Dendritic cell treated with granulocyte-macrophage colony-stimulating factor and Interleukin-4, amounts not matched to agents 40 ng/mL and 50 ng/mL, for 4 days (primary cell): ENCODE measurements at regions of chr1 and their contacts with region 1.

Region 1: GRCh38 chr1:173409613-173410012 is 67.5 kb upstream of the PRDX6 start:
- H3K4me3 Mint-ChIP-seq: no peak overlapping the region
- H3K27ac Mint-ChIP-seq: no peak overlapping the region
- H3K4me1 Mint-ChIP-seq: peaks cover 54% of the 10 kb centered on the region
- H3K27me3 Mint-ChIP-seq: peaks cover 3% of the 10 kb centered on the region

Region 2: GRCh38 chr1:173117108-173117633 is 292.4 kb before region 1 on chr1:
- intact Hi-C with region 1: loop called (anchors 5 kb)
- H3K4me3 Mint-ChIP-seq: no peak overlapping the region
- H3K27ac Mint-ChIP-seq: peak overlapping the region; percentile 73
- H3K4me1 Mint-ChIP-seq: peaks cover 52% of the 10 kb centered on the region
- H3K27me3 Mint-ChIP-seq: no peaks in the 10 kb centered on the region

Region 3: DNA sequence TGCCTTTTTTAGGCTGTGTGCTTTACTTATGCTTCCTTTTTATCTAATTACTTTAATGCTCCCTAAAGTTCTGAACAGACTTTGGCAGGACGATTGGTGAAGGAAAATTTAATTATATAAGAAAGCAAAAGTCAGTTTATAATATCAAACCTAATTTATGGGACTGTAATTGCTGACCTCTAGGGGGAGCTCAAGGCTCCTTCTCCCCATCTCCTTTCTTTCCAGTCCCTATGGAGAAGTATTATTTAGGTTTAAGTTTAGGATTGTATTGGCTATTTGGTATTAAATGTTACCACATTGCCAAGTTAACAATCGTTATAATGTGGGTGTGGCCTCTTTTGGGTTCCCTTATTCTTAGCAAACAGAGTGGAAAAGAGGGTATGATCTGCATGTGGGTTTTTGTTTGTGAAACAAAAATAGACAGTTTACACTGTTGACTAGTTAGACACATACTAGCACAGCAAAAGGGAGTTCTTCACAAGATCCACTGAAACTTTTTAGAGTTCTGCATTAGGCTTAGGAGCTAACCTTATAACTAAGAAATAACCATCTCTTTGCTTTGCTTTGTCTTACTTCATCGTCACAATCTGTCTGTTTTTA is 154.3 kb before region 1 on chr1:
- intact Hi-C with region 1: loop called (anchors 10 kb)
- H3K4me3 Mint-ChIP-seq: no peak overlapping the region
- H3K27ac Mint-ChIP-seq: no peak overlapping the region
- H3K4me1 Mint-ChIP-seq: peaks cover 7% of the 10 kb centered on the region
- H3K27me3 Mint-ChIP-seq: no peaks in the 10 kb centered on the region

Region 4: DNA sequence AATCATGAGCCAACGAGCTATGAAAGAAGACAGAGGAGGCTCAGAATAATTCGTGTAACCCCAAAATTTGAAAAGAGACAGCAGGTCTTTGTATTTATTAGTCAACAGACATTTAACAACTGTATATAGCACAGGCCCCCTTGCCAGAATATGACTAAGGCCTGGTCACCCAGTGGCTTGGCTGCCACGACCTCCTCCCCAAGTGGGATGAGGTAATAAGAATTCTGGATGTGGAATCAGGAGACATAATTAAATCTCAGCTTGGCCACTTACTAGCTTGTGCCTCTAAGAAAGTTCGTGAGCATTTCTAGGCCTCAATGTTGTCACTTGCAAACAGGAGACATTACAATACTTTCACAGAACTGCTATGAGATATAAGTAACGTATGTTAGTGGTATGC is 68.3 kb before region 1 on chr1:
- intact Hi-C with region 1: loop called (anchors 10 kb)
- H3K4me3 Mint-ChIP-seq: no peak overlapping the region
- H3K27ac Mint-ChIP-seq: no peak overlapping the region
- H3K4me1 Mint-ChIP-seq: no peaks in the 10 kb centered on the region
- H3K27me3 Mint-ChIP-seq: no peaks in the 10 kb centered on the region

Region 5: DNA sequence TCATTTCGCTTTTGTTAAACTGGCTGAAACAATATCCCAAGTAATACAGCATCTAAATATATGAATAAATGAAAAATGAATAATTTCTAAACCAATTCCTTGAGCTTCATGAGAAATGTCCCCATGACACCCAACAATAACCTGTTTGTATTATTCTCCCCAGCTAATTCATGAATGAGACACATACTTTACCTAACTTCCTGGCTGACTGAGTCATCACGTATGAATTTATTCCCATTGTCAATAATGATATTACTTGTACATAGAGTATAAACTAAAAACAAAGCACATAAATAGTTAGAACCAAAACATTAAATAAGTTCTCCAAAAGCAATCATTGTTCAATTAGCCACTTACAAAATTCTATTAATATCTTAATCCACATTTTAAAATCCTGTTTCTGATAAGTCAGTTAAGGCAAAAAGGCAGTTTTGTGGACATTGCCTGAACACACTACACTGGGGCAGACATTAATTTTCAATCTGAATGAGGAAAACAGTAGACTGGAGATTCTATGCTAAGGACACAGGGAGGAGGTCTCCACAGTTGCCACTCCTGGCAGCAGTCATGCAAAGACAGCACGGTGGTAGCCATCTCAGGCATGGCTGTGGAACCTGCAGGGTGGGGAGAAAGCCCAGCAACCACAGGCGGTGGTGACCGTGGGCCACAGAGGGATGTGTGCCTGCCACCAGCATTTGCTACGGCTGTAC is 145.1 kb after region 1 on chr1:
- intact Hi-C with region 1: no loop called
- H3K4me3 Mint-ChIP-seq: no peak overlapping the region
- H3K27ac Mint-ChIP-seq: no peak overlapping the region
- H3K4me1 Mint-ChIP-seq: no peaks in the 10 kb centered on the region
- H3K27me3 Mint-ChIP-seq: no peaks in the 10 kb centered on the region

Region 6: DNA sequence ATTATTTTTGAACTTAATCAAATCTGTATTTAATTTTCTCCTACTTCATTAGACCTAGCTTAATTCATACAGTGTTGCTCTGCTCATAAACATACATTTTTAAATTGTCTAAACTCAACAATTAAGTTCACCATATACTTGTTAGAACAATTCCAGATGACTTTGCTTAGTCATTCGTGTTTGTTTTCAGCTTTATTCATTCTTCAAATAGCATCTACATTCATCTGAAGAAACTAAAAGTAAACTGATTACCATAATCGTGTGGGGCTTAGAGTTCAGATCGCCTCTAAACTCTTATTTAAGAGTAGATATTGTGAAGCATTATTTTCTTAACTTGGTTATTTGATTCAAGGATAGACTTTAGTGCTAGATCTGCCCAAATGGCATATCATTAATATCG is 339.5 kb after region 1 on chr1:
- intact Hi-C with region 1: no loop called
- H3K4me3 Mint-ChIP-seq: no peak overlapping the region
- H3K27ac Mint-ChIP-seq: no peak overlapping the region
- H3K4me1 Mint-ChIP-seq: no peaks in the 10 kb centered on the region
- H3K27me3 Mint-ChIP-seq: no peaks in the 10 kb centered on the region